ENCODE measurements at regions of chr4 and their contacts with region 1.

Region 1: GRCh38 chr4:158610790-158611189 is 60.9 kb downstream of the C4orf46 start:
- DNase-seq: no peak
- H3K4me3 ChIP-seq: no peak overlapping the region
- H3K27ac ChIP-seq: no peak overlapping the region
- H3K4me1 ChIP-seq: no peaks in the 10 kb centered on the region
- H3K27me3 ChIP-seq: no peaks in the 10 kb centered on the region
- CTCF ChIP-seq: no peak

Region 2: GRCh38 chr4:158371158-158371557 is 239.6 kb before region 1 on chr4:
- intact Hi-C with region 1: no loop called
- DNase-seq: no peak
- H3K4me3 ChIP-seq: no peak overlapping the region
- H3K27ac ChIP-seq: no peak overlapping the region
- H3K4me1 ChIP-seq: peaks cover 0 to 15% (median 2%) of the 10 kb centered on the region in 4 donors
- H3K27me3 ChIP-seq: no peaks in the 10 kb centered on the region
- CTCF ChIP-seq: no peak

Region 3: DNA sequence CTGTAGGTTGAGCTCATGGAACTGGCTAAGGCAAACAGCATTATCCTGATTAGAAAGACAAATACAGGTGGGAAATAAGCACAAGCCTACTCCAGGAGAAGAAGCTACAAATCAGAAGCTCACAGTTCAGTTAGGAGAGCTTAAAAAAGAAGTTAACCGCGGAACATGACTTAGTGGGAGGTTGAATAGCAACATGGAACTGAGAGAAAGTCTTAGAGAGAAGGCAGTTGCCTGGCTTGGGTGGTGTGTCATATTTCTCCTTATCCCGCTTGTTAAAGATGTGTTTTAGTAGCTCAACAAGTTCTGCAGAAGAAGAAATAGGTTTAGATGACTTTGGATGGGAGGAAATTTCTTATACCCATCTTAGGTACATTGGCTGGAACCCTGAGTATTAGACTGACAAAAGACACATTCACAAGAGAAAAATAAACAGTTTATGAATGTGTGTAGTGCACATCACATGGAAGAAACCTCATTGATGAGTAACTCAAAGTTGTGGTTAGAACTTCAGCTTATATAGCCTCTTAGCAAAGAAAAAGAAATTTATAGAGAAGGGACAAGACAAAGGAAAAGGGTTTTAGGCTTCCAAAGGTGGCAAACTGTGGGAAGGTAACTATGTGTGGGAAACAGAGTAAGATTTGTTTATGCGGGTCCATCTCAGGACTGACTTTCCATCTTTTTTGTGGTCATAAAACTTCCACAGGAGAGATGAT is 126.5 kb before region 1 on chr4:
- intact Hi-C with region 1: loop called (anchors 10 kb)
- DNase-seq: no peak
- H3K4me3 ChIP-seq: no peak overlapping the region
- H3K27ac ChIP-seq: no peak overlapping the region
- H3K4me1 ChIP-seq: no peaks in the 10 kb centered on the region
- H3K27me3 ChIP-seq: no peaks in the 10 kb centered on the region
- CTCF ChIP-seq: no peak

Region 4: DNA sequence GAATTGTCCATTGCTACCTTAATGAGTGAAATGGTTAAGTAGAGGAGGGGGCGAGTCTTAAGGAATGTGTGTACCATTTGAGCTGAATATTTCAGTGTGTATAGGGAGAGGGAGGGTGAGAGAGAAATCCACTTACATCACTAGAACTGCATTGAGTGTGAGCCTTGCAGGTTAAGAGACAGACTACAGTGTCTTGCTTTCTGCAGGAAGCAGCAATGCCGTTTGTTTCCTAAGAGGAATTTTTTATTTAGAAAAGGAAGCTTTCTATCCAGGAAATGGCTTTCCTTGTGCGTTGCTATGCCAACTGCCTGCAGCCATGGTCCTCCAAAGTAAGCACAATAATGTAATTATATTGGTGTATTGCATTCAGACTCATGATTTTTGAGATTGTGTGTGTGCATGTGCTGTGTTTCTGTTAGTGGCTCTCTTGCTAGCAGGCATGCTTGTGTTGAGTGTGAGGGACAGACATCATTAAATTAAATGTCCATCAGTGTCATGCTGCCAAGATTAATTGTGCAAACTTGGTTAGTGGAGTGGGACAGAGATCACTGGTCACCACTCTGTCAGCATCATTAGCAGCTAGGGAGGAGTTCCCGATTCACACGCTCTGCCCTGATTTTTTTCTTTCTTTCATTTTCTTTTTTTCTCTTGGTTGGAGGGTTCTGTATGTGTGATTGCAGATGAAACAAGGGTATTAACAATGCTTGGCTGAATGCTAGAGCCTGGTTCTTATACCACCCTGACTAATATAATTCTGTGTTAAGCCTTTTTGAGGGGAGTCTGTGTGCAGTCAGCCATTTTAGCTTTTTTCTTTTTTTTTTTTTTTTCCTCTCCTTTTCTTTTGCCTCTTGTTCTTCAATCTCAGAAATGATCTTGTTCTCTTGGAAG is 656.4 kb after region 1 on chr4:
- intact Hi-C with region 1: no loop called
- DNase-seq: no peak
- H3K4me3 ChIP-seq: peak overlapping the region; percentile 34 to 38
- H3K27ac ChIP-seq: peak overlapping the region; percentile 58 to 68
- H3K4me1 ChIP-seq: peaks cover 0 to 54% (median 6%) of the 10 kb centered on the region in 4 donors
- H3K27me3 ChIP-seq: no peaks in the 10 kb centered on the region
- CTCF ChIP-seq: no peak